Activated T-helper 2 cell treated with anti-CD3 and anti-CD28 coated beads, Interferon-gamma antibody, Interleukin-2, Interleukin-4, amounts not matched to agents 10 μg/mL and 5 μg/mL and 100 μg/mL, durations not matched to agents 14 hours and 24 hours and 36 hours (primary cell): ENCODE measurements at regions of chr17 and their contacts with region 1.

Region 1: GRCh38 chr17:74368092-74369081 is 1.1 kb downstream of the GPR142 start:
- DNase-seq: peak; percentile 56
- H3K4me3 Mint-ChIP-seq: no peak overlapping the region
- H3K27ac Mint-ChIP-seq: no peak overlapping the region
- H3K4me1 Mint-ChIP-seq: peaks cover 13% of the 10 kb centered on the region
- H3K27me3 Mint-ChIP-seq: peaks cover 3% of the 10 kb centered on the region

Region 2: GRCh38 chr17:74394977-74395376 is 26.6 kb after region 1 on chr17:
- intact Hi-C with region 1: no loop called
- DNase-seq: no peak
- H3K4me3 Mint-ChIP-seq: no peak overlapping the region
- H3K27ac Mint-ChIP-seq: no peak overlapping the region
- H3K4me1 Mint-ChIP-seq: no peaks in the 10 kb centered on the region
- H3K27me3 Mint-ChIP-seq: peaks cover 7% of the 10 kb centered on the region

Region 3: GRCh38 chr17:74457146-74457819 is 88.9 kb after region 1 on chr17:
- intact Hi-C with region 1: loop called (anchors 2 kb)
- DNase-seq: peak; percentile 44
- H3K4me3 Mint-ChIP-seq: no peak overlapping the region
- H3K27ac Mint-ChIP-seq: no peak overlapping the region
- H3K4me1 Mint-ChIP-seq: peaks cover 21% of the 10 kb centered on the region
- H3K27me3 Mint-ChIP-seq: peaks cover 4% of the 10 kb centered on the region

Region 4: GRCh38 chr17:74601944-74602572 is 233.7 kb after region 1 on chr17:
- intact Hi-C with region 1: loop called (anchors 5 kb)
- DNase-seq: no peak
- H3K4me3 Mint-ChIP-seq: no peak overlapping the region
- H3K27ac Mint-ChIP-seq: no peak overlapping the region
- H3K4me1 Mint-ChIP-seq: peaks cover 7% of the 10 kb centered on the region
- H3K27me3 Mint-ChIP-seq: peaks cover 30% of the 10 kb centered on the region